Activated CD4-positive, alpha-beta memory T cell treated with anti-CD3 and anti-CD28 coated beads, Interleukin-2, amount 10 ng/mL, durations not matched to agents 7 days and 5 days (primary cell): ENCODE measurements at regions of chr10 and their contacts with region 1.

Region 1: GRCh38 chr10:84537447-84537931 is 209.1 kb downstream of the CCSER2 start:
- DNase-seq: peak; percentile 37
- H3K4me3 Mint-ChIP-seq: no peak overlapping the region
- H3K27ac Mint-ChIP-seq: no peak overlapping the region
- H3K4me1 Mint-ChIP-seq: peaks cover 18% of the 10 kb centered on the region
- H3K27me3 Mint-ChIP-seq: peaks cover 15% of the 10 kb centered on the region

Region 2: GRCh38 chr10:84256510-84257342 is 280.8 kb before region 1 on chr10:
- CTCF ChIA-PET with region 1: interaction called, 239 read pairs
- POLR2A ChIA-PET with region 1: no interaction called
- DNase-seq: peak; percentile 43
- H3K4me3 Mint-ChIP-seq: no peak overlapping the region
- H3K27ac Mint-ChIP-seq: no peak overlapping the region
- H3K4me1 Mint-ChIP-seq: peaks cover 6% of the 10 kb centered on the region
- H3K27me3 Mint-ChIP-seq: peaks cover 14% of the 10 kb centered on the region

Region 3: DNA sequence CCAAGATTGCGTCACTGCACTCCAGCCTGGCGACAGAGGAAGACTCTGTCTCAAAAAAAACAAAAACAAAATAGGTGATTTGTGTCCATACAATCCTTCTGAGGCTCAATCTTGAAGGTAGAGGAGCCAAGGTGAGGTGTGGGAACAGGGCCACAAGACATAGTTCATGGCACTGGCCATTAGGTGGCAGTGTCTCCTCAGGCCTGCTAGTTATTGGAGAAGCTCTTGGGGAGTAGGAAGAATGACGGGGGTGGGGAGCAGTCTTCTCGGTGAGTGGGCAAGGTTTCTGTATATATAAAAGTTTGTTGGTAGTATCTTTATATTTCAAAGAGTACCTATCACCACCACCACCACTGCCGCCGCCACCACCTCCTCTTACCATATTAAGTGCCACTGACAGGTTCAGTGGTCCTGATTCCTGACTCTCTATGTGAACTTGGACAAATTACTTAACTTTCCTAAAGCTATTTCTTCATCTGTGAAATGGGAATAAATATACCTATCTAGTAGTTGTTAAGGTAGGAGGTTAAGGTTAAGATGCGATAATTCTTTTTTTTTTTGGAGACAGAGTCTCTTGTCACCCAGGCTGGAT is 185.1 kb before region 1 on chr10:
- CTCF ChIA-PET with region 1: interaction called, 17 read pairs
- POLR2A ChIA-PET with region 1: no interaction called
- DNase-seq: peak; percentile 65
- H3K4me3 Mint-ChIP-seq: no peak overlapping the region
- H3K27ac Mint-ChIP-seq: no peak overlapping the region
- H3K4me1 Mint-ChIP-seq: peaks cover 38% of the 10 kb centered on the region
- H3K27me3 Mint-ChIP-seq: no peaks in the 10 kb centered on the region

Region 4: DNA sequence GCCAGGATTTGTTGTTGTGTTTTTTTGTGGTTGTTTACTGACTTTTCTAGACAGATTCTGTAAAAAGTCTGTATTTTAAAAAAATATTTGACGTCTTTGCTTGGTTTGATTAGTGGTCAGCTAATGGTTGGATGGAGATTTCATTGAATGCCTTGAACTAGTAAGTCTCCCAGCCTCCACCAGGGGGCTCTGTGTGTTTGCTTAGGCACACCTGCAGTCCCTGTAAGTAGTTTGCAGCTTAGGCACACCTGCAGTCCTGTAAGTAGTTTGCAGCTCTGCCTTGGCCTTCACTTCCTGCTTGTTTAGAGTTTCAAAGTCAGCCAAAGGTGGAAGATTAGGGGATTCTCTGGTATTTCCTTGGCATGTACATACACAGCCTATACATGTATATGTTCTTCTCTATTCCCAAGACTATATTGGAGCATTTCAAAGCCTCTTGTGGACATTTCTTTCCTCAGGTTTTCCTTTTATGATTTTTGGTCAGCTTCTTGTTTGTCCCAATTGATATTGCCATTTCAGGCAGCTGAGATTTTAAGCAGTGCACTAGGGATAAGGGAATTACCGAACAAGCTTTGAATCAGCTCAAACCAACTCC is 107.5 kb before region 1 on chr10:
- CTCF ChIA-PET with region 1: interaction called, 40 read pairs
- POLR2A ChIA-PET with region 1: no interaction called
- DNase-seq: peak; percentile 68
- H3K4me3 Mint-ChIP-seq: no peak overlapping the region
- H3K27ac Mint-ChIP-seq: no peak overlapping the region
- H3K4me1 Mint-ChIP-seq: peaks cover 9% of the 10 kb centered on the region
- H3K27me3 Mint-ChIP-seq: no peaks in the 10 kb centered on the region

Region 5: GRCh38 chr10:84715911-84716310 is 178.4 kb after region 1 on chr10:
- CTCF ChIA-PET with region 1: interaction called, 17 read pairs
- POLR2A ChIA-PET with region 1: no interaction called
- DNase-seq: peak; percentile 20
- H3K4me3 Mint-ChIP-seq: no peak overlapping the region
- H3K27ac Mint-ChIP-seq: no peak overlapping the region
- H3K4me1 Mint-ChIP-seq: no peaks in the 10 kb centered on the region
- H3K27me3 Mint-ChIP-seq: peaks cover 2% of the 10 kb centered on the region